ENCODE measurements at regions of chr2 and their contacts with region 1.

Region 1: DNA sequence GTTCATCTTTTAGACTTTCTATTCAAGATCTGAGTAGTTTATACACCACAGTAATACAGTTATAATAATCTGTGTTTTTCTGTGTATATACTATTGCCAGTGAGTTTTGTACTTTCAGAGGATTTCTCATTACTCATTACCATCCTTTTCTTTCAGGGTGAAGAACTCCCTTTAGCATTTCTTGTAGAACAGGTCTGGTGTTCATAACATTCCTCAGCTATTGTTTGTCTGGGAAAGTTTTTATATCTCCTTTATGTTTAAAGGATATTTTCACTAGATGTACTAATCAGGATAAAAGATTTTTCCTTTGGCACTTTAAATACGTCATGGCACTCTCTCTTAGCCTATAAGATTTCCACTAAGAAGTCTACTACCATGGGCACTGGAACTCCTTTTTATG is 705.5 kb downstream of the SLC4A3 start:
- DNase-seq: no peak
- ATAC-seq: no peak
- H3K4me3 ChIP-seq: no peak overlapping the region
- H3K4me3 Mint-ChIP-seq: no peak overlapping the region
- H3K27ac ChIP-seq: no peak overlapping the region
- H3K27ac Mint-ChIP-seq: no peak overlapping the region
- H3K4me1 ChIP-seq: no peaks in the 10 kb centered on the region
- H3K4me1 Mint-ChIP-seq: no peaks in the 10 kb centered on the region
- H3K27me3 ChIP-seq: peaks cover 0 to 5% of the 10 kb centered on the region in 2 experiments
- H3K27me3 Mint-ChIP-seq: no peaks in the 10 kb centered on the region

Region 2: GRCh38 chr2:220310451-220310861 is 22.4 kb before region 1 on chr2:
- CTCF ChIA-PET with region 1: no interaction called
- POLR2A ChIA-PET with region 1: interaction called in 1 of 2 experiments, 11 read pairs
- DNase-seq: no peak
- ATAC-seq: no peak
- H3K4me3 ChIP-seq: no peak overlapping the region
- H3K4me3 Mint-ChIP-seq: no peak overlapping the region
- H3K27ac ChIP-seq: no peak overlapping the region
- H3K27ac Mint-ChIP-seq: no peak overlapping the region
- H3K4me1 ChIP-seq: no peaks in the 10 kb centered on the region
- H3K4me1 Mint-ChIP-seq: no peaks in the 10 kb centered on the region
- H3K27me3 ChIP-seq: no peaks in the 10 kb centered on the region
- H3K27me3 Mint-ChIP-seq: no peaks in the 10 kb centered on the region